Ascending aorta (tissue), 2 donors: ENCODE measurements at regions of chrX and their contacts with region 1.

Region 1: DNA sequence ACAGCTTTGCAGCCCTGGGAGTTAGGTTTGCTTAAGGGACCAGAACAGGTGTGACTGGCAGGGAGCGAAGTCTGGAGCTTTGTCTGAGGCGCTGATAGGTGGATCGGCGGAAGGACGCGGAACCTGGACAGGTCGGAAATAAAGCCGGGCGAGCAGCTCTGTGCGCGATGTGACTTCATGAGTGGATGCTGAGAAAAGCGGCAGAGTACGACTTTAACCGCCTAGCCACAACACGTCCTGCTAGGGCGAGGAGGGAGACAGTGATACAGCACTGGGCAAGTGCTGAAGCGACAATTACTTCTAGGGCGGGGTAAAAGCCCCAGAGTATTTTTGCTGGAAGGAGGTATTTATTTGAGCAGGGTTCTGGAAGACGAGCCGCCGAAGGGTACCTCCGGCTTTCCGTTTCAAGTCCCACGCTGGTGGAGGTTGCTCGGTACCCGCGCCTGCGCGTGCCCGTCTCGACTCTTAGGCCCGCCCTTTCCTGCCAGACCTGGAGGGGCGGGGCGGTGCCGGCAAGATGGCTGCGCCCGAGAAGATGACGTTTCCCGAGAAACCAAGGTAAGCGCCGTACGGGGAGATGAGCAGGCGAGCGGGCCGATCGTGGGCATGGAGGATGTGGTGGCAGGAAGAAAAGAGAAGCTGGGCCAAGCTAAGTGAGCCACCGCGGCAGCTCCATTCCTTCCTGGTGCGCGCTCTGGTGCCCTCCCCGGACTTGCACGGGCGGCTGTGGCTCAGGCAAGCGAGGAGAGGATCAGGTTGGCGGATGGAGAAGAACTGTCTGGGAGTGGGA is at the start of gene ZRSR2:
- DNase-seq: peak; percentile 41 to 94
- H3K4me3 ChIP-seq: peak within 1 kb of the TSS; percentile 80 to 90
- H3K27ac ChIP-seq: peak within 1 kb of the TSS; percentile 85
- H3K4me1 ChIP-seq: peaks cover 4 to 12% of the 10 kb centered on the region in 2 donors
- H3K27me3 ChIP-seq: no peaks in the 10 kb centered on the region
- CTCF ChIP-seq: no peak
- total RNA-seq, gene ZRSR2: 0.64 TPM

Region 2: DNA sequence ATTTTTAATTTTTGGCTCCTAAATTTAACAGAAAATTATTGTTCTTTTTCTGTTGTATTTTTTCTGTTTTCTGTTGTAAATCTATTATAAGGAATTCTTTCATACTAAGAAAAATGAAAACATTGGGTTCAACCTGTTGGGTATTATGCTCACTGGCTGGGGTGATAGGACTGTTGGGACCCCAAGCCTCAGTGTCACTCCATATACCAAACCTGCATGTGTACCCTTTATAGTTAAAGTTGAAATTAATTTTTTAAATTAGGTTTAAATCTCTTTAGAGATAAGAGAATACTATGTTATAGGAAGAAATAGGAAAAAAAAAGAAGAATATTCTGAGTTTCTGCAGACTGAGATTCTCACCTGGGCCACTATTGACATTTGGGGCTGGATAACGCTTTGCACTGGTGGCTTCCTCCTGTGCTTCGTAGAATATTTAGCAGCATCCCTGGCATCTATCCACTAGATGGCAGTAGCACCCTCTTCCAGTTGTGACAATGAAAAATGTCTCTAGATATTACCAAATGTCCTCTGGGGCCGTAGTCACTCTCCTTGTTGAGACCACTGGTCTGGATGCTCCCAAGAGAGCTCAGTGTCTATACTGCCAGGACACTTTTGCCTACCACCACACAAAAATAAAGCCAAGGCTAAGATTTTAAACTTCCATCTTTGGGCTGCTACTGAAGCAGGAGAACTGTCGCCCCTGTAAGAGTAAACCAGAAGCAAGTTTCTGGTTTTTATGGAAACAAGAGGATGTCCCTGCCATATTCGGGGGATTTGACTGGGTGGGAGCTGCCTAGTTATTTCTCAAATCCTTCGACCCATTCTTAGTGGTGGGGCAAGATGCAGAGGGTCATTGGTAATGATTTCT is 103.1 kb before region 1 on chrX:
- intact Hi-C with region 1: loop called (anchors 1 kb)
- DNase-seq: peak in 1 of 2 donors; percentile 77
- H3K4me3 ChIP-seq: no peak overlapping the region
- H3K27ac ChIP-seq: no peak overlapping the region
- H3K4me1 ChIP-seq: no peaks in the 10 kb centered on the region
- H3K27me3 ChIP-seq: no peaks in the 10 kb centered on the region
- CTCF ChIP-seq: peak; percentile 60 to 79 (median 72)

Region 3: DNA sequence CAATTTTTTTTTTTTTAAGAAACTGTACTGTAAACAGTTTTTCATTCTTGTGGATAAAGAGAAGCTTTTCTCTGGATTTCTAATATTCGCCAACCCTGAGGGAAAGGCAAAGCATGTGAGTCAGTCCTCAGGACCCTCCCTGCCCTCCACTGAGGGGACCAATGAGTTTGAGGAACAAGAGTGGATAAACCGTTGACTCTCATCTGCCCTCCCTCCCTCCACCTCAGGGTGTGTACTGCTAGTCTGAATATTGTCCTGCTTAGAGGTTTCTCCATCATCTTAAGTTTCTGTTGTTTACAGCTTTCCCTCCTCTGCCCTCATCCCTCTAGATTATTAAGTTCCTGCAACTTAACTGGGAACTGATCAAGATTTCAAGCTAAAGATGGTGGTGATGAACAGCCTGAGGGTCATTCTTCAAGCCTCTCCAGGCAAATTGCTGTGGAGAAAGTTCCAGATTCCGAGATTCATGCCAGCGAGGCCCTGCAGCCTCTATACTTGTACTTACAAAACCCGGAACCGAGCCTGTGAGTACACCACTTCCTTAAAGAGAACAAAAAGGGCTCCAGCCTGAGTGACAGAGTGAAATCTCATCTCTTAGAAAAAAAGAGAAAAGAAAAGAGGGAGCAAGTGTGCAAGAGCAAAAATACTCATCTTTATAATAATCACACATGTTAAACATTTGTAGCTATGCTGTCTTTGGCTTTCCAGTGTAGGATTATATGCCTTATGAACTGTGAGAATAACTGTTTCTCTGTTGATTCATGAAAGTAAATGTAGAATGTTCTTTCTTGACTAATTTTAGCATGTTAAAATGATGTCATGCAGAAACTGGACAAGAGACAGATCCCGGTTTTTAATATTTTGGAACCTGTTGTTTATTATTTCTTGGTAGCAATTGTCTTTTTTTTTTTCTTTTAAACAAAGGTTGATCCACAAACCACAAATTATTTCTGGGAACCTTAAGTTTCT is 40.2 kb before region 1 on chrX:
- intact Hi-C with region 1: loop called (anchors 2 kb)
- DNase-seq: peak in 1 of 2 donors; percentile 72
- H3K4me3 ChIP-seq: peak overlapping the region in 1 of 2 donors; percentile 13
- H3K27ac ChIP-seq: peak overlapping the region; percentile 83 to 89
- H3K4me1 ChIP-seq: peaks cover 3 to 26% of the 10 kb centered on the region in 2 donors
- H3K27me3 ChIP-seq: no peaks in the 10 kb centered on the region
- CTCF ChIP-seq: no peak